PC-9 (cell line): ENCODE measurements at regions of chr17 and their contacts with region 1.

Region 1: DNA sequence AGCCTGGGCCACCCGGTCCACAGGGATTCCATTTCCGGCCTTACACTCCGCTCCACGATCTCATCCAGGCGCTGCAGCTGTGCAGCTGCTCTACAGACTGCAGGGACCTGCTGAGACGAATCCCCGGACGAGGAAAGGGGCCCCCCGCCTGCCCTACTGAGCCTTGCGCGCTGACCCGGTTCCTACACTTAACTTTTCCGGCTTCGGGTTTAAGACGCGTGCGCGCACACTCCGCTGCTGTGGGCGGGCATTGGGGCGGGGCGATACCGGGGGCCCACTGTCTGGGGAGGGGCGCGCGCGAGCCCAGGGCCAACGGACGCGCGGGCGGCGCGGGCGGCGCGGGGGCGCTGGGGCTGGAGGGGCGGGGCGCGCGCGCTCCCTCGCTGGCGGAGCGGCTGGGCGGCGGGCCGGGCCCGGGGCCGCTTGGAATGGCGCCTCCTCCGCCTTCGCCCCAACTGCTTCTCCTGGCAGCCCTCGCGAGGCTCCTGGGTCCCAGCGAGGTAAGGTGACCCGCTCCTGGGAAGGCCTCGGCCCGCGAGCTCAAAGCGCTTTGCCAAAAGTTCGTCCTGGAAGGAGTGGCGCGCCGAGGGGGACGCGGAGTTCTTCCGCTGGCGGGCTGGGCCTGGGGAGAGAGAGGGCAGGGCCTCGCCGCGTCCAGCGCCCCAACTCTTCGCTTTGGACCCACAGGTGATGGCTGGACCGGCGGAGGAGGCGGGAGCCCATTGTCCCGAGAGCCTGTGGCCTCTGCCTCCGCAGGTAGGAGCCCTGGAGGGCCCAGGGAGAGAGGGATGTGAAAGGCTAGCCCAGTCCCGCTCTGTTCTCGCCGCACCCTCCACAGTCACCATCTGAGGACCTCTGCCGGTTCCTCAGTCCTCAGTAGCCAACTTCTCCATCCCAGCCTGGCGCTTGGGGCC is at the start of gene TP53I13:
- DNase-seq: peak; percentile 64 to 89
- H3K4me3 ChIP-seq: peak within 1 kb of the TSS; percentile 76
- H3K27ac ChIP-seq: peak within 1 kb of the TSS; percentile 53
- H3K4me1 ChIP-seq: peaks cover 28% of the 10 kb centered on the region
- H3K27me3 ChIP-seq: no peaks in the 10 kb centered on the region
- CTCF ChIP-seq: no peak
- total RNA-seq, gene TP53I13: 46.9 and 68.8 TPM in 2 replicates

Region 2: DNA sequence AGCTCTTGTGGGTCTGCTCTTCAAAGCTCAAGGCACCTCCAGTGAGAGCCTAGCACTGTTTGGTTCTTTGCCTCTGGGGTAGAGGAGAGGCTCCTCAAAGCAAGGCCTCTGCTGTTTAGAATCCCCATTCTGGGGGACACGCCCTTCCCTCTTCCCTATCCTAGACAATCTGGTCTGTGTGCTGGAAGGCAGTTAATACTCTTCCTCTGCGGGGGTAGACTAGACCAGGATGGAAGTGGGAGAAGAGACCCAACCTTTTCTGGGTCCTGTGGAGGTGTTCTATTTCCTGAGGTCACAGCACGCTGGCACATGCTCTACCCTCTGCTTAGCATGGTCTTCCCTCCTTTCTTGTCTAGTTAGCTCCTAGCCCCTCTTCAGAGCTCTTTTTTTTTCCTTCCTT is 706.0 kb before region 1 on chr17:
- CTCF ChIA-PET with region 1: no interaction called
- POLR2A ChIA-PET with region 1: interaction called, 22 read pairs
- intact Hi-C with region 1: no loop called
- DNase-seq: no peak
- H3K4me3 ChIP-seq: no peak overlapping the region
- H3K27ac ChIP-seq: no peak overlapping the region
- H3K4me1 ChIP-seq: no peaks in the 10 kb centered on the region
- H3K27me3 ChIP-seq: no peaks in the 10 kb centered on the region
- CTCF ChIP-seq: no peak

Region 3: DNA sequence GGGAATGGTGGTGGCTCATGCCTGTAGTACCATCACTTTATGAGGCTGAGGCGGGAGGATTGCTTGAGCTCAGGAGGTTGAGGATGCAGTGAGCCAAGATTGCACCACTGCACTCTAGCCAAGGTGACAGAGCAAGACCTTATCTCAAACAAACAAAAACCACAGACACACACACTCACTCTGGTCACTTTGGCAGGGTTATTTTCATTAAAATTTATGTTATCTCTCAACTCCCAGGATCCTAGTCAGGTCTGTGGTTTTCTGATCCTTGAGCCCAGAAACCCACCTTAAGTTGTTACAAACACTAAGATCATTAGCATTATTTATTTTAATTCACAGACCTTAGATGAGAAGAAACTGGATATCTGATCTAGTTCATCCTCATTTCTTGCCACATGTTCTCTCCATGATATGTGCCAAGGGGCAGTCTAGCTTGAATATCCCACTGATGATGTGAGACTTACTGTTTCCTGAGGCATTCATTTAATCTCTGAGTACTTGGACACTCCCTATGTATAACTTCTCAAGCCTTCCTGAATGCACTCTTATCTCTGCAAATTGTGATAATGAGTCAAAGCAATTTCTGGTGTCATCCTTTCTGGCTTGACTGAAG is 11.4 kb before region 1 on chr17:
- CTCF ChIA-PET with region 1: interaction called, 11 read pairs
- POLR2A ChIA-PET with region 1: no interaction called
- intact Hi-C with region 1: no loop called
- DNase-seq: peak in 1 of 2 experiments; percentile 52
- H3K4me3 ChIP-seq: no peak overlapping the region
- H3K27ac ChIP-seq: no peak overlapping the region
- H3K4me1 ChIP-seq: peaks cover 14% of the 10 kb centered on the region
- H3K27me3 ChIP-seq: no peaks in the 10 kb centered on the region
- CTCF ChIP-seq: no peak

Region 4: GRCh38 chr17:29579866-29580771 is 11.5 kb after region 1 on chr17:
- CTCF ChIA-PET with region 1: no interaction called
- POLR2A ChIA-PET with region 1: no interaction called
- intact Hi-C with region 1: no loop called
- DNase-seq: peak; percentile 69 to 83
- H3K4me3 ChIP-seq: no peak overlapping the region
- H3K27ac ChIP-seq: no peak overlapping the region
- H3K4me1 ChIP-seq: no peaks in the 10 kb centered on the region
- H3K27me3 ChIP-seq: no peaks in the 10 kb centered on the region
- CTCF ChIP-seq: peak; percentile 87

Region 5: GRCh38 chr17:29617125-29617480 is 48.5 kb after region 1 on chr17:
- CTCF ChIA-PET with region 1: no interaction called
- POLR2A ChIA-PET with region 1: no interaction called
- intact Hi-C with region 1: no loop called
- DNase-seq: no peak
- H3K4me3 ChIP-seq: no peak overlapping the region
- H3K27ac ChIP-seq: no peak overlapping the region
- H3K4me1 ChIP-seq: peaks cover 31% of the 10 kb centered on the region
- H3K27me3 ChIP-seq: no peaks in the 10 kb centered on the region
- CTCF ChIP-seq: no peak; the same call in 1 of the 2 replicates